Left cardiac atrium (tissue), 4 donors: ENCODE measurements at regions of chr9 and their contacts with region 1.

Region 1: DNA sequence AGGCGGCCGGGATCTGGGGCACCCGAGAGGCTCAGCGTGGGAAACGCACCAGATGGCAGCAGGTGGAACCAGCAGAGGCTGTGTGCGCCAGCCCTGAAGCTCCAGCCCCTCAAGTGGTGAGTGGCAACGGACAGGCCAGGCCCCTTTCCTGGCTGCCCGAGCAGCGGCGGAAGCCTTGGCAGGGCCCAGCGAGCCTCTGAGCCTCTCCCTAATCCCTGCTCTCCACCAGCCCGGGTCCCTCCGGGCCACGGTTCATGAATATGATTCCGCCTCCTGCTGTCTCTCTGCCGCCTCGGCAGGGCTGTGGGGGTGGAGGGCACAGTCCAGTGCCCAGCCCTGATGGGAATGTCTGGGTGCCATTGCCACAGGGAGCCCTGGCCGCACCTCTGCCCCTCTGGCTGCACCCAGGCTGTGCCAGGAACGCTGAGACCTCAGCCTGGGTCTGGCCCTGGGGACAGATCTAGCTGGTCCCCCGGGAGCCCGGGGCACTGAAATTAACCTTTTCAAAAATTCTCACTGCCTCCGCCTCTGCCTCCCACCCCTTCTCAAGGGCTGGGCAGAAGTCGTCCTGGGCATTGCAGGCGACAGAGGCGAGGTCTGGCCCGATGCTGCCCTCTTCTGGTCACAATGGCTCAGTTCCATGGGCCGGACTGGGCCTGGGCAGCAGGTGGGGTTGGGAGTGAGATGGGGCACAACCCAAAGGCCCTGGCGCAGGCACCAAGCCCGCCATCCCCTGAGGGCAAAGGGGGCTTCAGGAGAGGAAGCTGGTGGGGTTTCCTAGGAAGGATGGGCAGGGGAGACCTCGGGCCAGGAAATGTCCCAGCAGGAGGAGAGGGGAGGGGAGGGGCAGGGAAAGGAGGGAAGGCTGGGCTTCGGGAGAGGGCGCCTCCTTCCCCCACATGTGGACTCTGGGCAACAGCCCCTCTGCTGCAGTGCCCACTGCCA is 20.3 kb downstream of the CCDC187 start:
- DNase-seq: peak; percentile 79
- ATAC-seq: peak; percentile 96

Region 2: GRCh38 chr9:135602789-135603481 is 680.6 kb before region 1 on chr9:
- intact Hi-C with region 1: loop called in 1 of 2 experiments (anchors 10 kb)
- DNase-seq: no peak
- ATAC-seq: peak; percentile 17 to 23

Region 3: GRCh38 chr9:136011703-136012521 is 271.7 kb before region 1 on chr9:
- intact Hi-C with region 1: no loop called
- DNase-seq: peak; percentile 94
- ATAC-seq: peak; percentile 72 to 74

Region 4: GRCh38 chr9:136075881-136076678 is 207.5 kb before region 1 on chr9:
- intact Hi-C with region 1: no loop called
- DNase-seq: peak; percentile 17
- ATAC-seq: no peak

Region 5: DNA sequence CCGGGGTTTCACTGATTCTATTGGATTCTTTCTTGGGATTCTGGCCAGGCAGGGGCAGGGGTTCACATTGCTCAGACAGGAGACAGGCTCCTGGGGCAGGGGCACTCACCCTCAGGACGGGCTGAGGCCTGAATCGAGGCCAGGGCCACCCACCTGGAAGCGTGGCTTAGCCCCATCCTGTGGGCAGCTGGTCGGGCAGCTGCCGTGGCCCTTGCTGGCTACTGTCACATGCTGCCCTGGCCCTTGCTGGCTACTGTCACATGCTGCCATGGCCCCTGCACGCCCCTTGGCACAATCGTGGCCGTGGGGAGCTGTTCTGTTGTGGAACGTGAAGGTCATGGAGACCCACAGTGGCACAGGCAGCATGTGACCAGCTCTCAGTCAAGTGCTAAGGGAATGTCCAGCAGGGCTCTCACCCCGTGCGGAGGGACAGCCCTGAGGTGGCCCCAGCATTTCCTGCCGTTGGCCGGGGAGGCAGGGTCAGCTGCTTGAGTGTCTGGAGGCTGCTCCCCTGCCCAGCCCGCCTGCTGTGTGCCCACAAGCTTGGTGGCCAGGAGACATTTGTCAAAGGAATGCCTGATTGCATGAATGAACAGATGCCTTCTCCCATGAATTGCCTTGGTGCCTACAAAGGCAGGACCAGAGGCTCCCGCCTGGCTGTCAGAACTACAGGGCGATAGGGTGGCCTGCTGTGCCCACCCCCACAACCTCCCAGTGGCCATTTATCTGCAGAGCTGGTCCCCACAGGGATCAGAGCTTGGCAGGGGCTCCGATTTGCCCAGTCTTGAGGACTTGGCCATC is 148.0 kb before region 1 on chr9:
- intact Hi-C with region 1: loop called (anchors 2 to 5 kb)
- DNase-seq: no peak
- ATAC-seq: no peak

Region 6: DNA sequence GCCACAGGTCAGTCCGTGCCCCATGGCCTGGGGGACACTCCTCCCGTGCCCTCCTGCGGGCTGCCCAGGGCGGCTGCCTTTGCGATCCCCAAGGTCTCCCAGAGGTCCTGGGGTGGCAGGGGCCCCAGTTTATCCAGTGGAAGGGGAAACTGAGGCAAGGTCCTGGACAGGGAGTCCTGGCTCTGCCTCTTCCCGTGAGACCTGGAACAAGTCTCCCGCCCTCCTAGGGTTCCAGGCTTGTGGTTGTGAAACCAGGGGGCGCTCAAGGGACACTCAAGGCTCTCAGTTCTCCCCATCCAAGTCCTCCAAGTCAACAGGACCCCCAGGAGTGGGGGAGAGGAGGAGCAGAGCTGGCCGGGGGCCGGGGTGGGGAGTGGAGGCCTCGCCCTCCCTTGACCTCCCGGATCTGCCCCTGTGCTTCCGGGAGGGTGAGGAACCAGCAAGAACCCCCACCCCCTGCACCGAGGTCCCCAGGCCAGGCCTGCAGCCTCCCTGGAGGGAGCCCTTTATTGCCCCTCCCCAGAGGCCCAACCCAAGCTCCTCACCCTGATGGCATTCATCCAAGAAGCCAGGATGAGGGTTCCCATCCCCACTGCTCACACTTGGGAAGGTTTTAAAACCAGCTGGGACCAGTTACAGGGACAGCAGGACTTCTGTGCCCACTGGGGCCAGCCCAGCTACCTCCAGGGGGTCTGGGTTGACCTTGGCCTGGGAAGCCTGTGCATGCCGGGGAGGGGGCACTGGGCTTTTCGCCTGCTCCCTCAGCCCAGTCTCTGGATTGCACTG is 140.2 kb before region 1 on chr9:
- intact Hi-C with region 1: loop called in 1 of 2 experiments (anchors 5 kb)
- DNase-seq: no peak
- ATAC-seq: no peak

Region 7: GRCh38 chr9:136170006-136170901 is 113.3 kb before region 1 on chr9:
- intact Hi-C with region 1: loop called in 1 of 2 experiments (anchors 2 kb)
- DNase-seq: no peak
- ATAC-seq: peak; percentile 53 to 67